AG04450 (cell line): ENCODE measurements at regions of chr5 and their contacts with region 1.

Region 1: GRCh38 chr5:96868603-96869371 is 7.5 kb upstream of the ERAP2 start:
- DNase-seq: peak; percentile 61
- H3K4me3 ChIP-seq: no peak overlapping the region
- H3K27ac ChIP-seq: no peak overlapping the region
- H3K27me3 ChIP-seq: no peaks in the 10 kb centered on the region
- CTCF ChIP-seq: peak; percentile 100

Region 2: DNA sequence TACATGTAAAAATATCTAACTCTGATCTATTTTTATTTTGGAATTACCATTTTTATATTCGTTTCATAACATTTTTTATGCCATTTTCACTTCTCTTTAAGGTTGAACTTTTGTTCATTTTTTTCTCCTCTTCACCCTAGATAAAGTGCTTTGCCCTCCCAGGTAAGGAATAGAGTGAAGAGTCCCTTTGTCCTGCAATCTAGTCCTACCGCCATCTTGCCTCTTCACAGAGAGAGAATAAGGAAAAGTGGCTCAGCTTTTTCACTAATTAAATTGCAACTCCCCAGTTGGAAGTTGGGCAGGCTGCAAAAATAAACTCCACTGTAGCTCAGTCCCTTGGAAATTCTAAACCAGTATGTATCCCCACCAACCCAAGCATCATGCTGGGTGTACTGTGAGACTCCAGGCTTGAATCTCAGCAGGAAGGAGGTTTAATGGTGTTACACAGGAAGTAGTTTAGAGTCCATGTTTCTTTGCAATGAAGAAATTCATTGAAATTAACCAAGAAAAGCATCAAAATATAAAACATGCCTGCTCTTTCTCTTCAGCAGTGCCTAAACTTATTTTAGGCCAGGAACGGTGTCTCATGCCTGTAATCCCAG is 375.5 kb before region 1 on chr5:
- CTCF ChIA-PET with region 1: no interaction called
- POLR2A ChIA-PET with region 1: no interaction called
- DNase-seq: no peak
- H3K4me3 ChIP-seq: no peak overlapping the region
- H3K27ac ChIP-seq: no peak overlapping the region
- H3K27me3 ChIP-seq: no peaks in the 10 kb centered on the region
- CTCF ChIP-seq: no peak

Region 3: DNA sequence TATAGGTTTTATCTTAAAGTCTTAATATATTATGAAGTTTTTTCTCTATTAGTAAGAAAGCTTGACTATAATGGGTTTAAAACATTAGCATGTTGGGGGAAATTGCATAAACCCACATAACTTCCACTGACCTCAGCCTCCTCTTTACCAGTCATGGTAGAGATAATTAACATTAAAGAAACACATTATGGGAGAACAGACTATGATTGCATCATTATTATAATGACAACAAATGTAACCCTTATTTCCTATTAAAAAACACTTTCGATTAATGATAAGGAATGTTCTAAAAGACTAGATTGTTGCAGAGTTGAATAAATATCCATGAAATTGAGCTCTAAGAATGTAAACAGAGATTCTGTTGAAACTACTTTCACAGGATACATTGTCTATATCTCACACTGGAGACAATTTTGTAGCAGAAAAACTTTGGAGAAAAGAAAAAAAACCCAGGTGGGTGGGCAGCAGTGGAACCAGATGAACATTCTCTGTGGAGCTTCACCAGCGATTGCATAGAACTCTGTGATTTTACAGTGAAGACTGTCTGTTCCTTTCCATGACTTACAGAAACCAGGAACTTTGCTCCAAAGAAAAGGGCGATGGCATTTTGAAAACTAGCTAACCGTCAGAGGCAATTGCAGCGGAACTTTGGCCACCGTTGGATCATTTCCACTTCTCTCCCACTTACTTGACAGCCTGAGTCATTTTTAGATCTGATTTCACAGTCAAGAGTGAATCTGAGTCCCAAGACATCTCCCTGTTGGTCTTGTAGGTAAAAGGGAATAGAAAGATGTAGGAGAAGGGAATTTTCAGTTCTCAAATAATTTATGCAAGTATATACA is 13.5 kb before region 1 on chr5:
- CTCF ChIA-PET with region 1: interaction called, 54 read pairs
- POLR2A ChIA-PET with region 1: no interaction called
- DNase-seq: peak; percentile 33
- H3K4me3 ChIP-seq: peak overlapping the region; percentile 42
- H3K27ac ChIP-seq: peak overlapping the region; percentile 74
- H3K27me3 ChIP-seq: no peaks in the 10 kb centered on the region
- CTCF ChIP-seq: no peak

Region 4: GRCh38 chr5:96885518-96886338 is 16.9 kb after region 1 on chr5:
- CTCF ChIA-PET with region 1: interaction called, 13 read pairs
- POLR2A ChIA-PET with region 1: no interaction called
- DNase-seq: no peak
- H3K4me3 ChIP-seq: no peak overlapping the region
- H3K27ac ChIP-seq: no peak overlapping the region
- H3K27me3 ChIP-seq: no peaks in the 10 kb centered on the region
- CTCF ChIP-seq: no peak

Region 5: GRCh38 chr5:96997265-96997859 is 128.6 kb after region 1 on chr5:
- CTCF ChIA-PET with region 1: interaction called, 21 read pairs
- POLR2A ChIA-PET with region 1: no interaction called
- DNase-seq: no peak
- H3K4me3 ChIP-seq: no peak overlapping the region
- H3K27ac ChIP-seq: no peak overlapping the region
- H3K27me3 ChIP-seq: no peaks in the 10 kb centered on the region
- CTCF ChIP-seq: peak; percentile 51

Region 6: DNA sequence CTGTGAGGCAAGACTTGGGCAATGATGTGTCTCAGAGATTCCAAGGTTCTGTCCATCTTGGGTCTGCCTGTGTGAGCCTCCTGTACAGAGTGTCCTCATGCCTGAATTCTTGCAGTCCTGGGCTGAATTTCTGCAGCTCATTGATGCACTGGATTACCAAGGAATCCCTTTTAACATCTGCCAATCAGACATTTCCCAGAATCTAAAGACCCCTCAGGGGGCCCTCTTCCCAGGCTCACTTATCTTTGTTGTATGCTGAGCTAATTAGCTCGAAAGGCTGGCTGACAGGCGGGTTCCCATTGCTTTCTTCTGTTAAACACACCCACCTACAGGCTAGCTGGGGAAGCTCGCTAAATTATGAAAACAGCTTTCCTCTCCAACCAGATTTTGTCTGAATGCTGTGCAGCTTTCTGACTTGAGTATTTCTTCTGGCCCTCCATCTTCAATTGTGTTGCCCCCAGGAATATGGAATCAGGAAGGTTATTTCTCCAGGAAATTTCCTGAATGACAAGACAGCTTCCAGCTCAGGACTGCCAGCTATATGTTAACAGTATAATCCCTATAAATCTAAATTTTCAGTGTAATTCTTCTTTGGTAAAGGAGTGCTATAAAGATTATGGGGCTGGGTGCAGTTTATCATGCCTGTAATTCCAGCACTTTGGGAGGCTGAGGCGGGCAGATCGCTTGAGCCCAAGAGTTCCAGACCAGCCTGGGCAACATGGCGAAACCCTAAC is 273.9 kb after region 1 on chr5 and contains the start of gene LIX1:
- CTCF ChIA-PET with region 1: interaction called, 48 read pairs
- POLR2A ChIA-PET with region 1: no interaction called
- DNase-seq: no peak
- H3K4me3 ChIP-seq: no peak within 1 kb of the TSS
- H3K27ac ChIP-seq: no peak within 1 kb of the TSS
- H3K27me3 ChIP-seq: peaks cover 14% of the 10 kb centered on the region
- CTCF ChIP-seq: peak; percentile 64
- polyA plus RNA-seq, gene LIX1: not detected in 2 replicates

Region 7: DNA sequence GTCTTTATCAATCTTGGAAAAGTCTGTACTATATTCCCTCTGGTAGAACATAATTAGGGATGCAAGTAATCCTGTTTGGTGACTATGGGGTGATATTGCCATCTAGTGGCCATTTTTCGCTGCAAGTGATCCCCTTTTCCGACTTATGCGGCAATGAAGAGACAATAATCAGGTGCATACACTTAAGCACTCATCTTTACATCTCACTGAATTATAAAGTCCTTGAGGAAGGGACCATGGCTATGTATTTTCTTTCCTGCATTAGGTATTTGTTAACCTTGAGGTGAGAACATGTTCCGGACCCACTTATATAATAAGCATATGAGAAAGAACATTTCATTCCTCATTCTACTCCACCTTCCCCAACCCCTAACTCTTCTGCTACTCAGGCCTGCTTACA is 293.3 kb after region 1 on chr5:
- CTCF ChIA-PET with region 1: interaction called, 97 read pairs
- POLR2A ChIA-PET with region 1: no interaction called
- DNase-seq: peak; percentile 69
- H3K4me3 ChIP-seq: no peak overlapping the region
- H3K27ac ChIP-seq: no peak overlapping the region
- H3K27me3 ChIP-seq: no peaks in the 10 kb centered on the region
- CTCF ChIP-seq: peak; percentile 93